Activated naive CD4-positive, alpha-beta T cell treated with anti-CD3 and anti-CD28 coated beads for 36 hours (primary cell): ENCODE measurements at regions of chr4 and their contacts with region 1.

Region 1: GRCh38 chr4:72701987-72702819 is 133.2 kb upstream of the ADAMTS3 start:
- DNase-seq: peak; percentile 56
- H3K4me3 Mint-ChIP-seq: peak overlapping the region; percentile 68
- H3K27ac Mint-ChIP-seq: no peak overlapping the region
- H3K4me1 Mint-ChIP-seq: no peaks in the 10 kb centered on the region
- H3K27me3 Mint-ChIP-seq: peaks cover 2% of the 10 kb centered on the region

Region 2: GRCh38 chr4:72326692-72327632 is 375.2 kb before region 1 on chr4:
- CTCF ChIA-PET with region 1: no interaction called
- intact Hi-C with region 1: loop called (anchors 5 kb)
- DNase-seq: no peak
- H3K4me3 Mint-ChIP-seq: no peak overlapping the region
- H3K27ac Mint-ChIP-seq: no peak overlapping the region
- H3K4me1 Mint-ChIP-seq: no peaks in the 10 kb centered on the region
- H3K27me3 Mint-ChIP-seq: peaks cover 10% of the 10 kb centered on the region

Region 3: GRCh38 chr4:72410158-72410557 is 292.0 kb before region 1 on chr4:
- CTCF ChIA-PET with region 1: no interaction called
- intact Hi-C with region 1: no loop called
- DNase-seq: no peak
- H3K4me3 Mint-ChIP-seq: no peak overlapping the region
- H3K27ac Mint-ChIP-seq: no peak overlapping the region
- H3K4me1 Mint-ChIP-seq: no peaks in the 10 kb centered on the region
- H3K27me3 Mint-ChIP-seq: no peaks in the 10 kb centered on the region

Region 4: GRCh38 chr4:72690771-72691170 is 11.4 kb before region 1 on chr4:
- CTCF ChIA-PET with region 1: no interaction called
- intact Hi-C with region 1: no loop called
- DNase-seq: no peak
- H3K4me3 Mint-ChIP-seq: no peak overlapping the region
- H3K27ac Mint-ChIP-seq: no peak overlapping the region
- H3K4me1 Mint-ChIP-seq: no peaks in the 10 kb centered on the region
- H3K27me3 Mint-ChIP-seq: peaks cover 1% of the 10 kb centered on the region

Region 5: GRCh38 chr4:72886602-72887001 is 184.4 kb after region 1 on chr4:
- CTCF ChIA-PET with region 1: no interaction called
- intact Hi-C with region 1: loop called (anchors 2 kb)
- DNase-seq: no peak
- H3K4me3 Mint-ChIP-seq: no peak overlapping the region
- H3K27ac Mint-ChIP-seq: no peak overlapping the region
- H3K4me1 Mint-ChIP-seq: no peaks in the 10 kb centered on the region
- H3K27me3 Mint-ChIP-seq: peaks cover 16% of the 10 kb centered on the region

Region 6: GRCh38 chr4:73142995-73143547 is 440.9 kb after region 1 on chr4:
- CTCF ChIA-PET with region 1: no interaction called
- intact Hi-C with region 1: loop called (anchors 1 kb)
- DNase-seq: no peak
- H3K4me3 Mint-ChIP-seq: no peak overlapping the region
- H3K27ac Mint-ChIP-seq: no peak overlapping the region
- H3K4me1 Mint-ChIP-seq: peaks cover 8% of the 10 kb centered on the region
- H3K27me3 Mint-ChIP-seq: no peaks in the 10 kb centered on the region

Region 7: DNA sequence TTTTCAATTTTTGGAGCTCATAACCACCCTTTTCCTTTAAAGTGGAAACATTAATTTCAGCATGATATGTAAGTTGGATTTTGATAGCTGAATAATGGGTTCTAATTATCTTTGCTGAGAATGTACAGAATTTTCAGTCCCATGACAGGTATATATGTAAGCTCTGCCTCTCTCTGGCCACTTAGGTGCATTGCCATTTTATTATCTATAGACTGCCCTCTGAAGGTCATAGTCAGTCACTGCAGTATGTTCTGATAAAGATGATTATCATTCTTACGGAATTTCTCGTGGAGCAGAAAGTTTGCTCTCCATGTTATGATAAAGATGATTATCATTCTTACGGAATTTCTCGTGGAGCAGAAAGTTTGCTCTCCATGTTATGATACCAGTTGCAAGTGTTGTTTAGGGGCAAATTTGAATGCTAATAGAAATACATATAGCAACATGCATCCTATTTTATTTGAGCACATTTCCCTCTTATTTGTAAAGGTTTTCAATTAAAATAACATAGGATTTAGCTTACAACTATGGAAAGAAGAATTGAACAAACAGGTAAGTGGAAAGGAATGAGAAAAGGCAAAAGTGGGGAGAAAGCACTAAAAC is 744.2 kb after region 1 on chr4:
- CTCF ChIA-PET with region 1: interaction called, 3 read pairs
- intact Hi-C with region 1: loop called (anchors 2 kb)
- DNase-seq: peak; percentile 4
- H3K4me3 Mint-ChIP-seq: no peak overlapping the region
- H3K27ac Mint-ChIP-seq: no peak overlapping the region
- H3K4me1 Mint-ChIP-seq: no peaks in the 10 kb centered on the region
- H3K27me3 Mint-ChIP-seq: peaks cover 11% of the 10 kb centered on the region